ENCODE measurements at regions of chr18 and their contacts with region 1.

Region 1: DNA sequence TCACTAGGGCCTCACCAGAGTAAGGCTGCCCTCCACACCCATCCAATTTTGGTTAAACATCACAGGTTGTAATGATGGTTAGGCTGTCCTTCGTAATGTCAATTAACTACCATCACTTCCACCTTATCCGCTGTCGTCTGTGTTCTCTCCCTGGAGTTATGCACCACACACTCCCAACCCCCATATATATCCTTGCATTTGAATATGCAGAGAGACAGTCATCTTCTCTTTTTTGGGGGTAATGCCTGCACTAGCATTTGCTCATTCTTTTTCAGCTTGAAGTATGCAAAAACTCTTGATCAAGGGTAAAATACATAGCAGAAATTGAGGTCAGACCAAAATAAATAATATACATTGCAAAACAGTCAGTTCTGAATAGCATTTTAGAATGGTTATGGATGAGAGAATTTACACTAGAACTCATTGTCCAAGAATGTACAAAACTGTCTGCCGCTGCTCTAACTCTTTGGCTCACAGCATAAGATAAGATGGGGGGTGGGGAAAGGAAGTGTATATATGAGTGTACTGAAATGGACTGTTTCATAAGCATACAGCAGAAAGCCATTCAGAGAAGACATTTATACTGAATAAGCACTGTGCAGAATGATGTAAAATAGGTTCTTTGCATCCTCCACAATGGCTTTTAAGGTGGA is 397.8 kb upstream of the CHST9 start:
- DNase-seq: no peak
- ATAC-seq: no peak
- H3K4me3 ChIP-seq: no peak overlapping the region
- H3K27ac ChIP-seq: no peak overlapping the region
- H3K4me1 ChIP-seq: no peaks in the 10 kb centered on the region
- H3K27me3 ChIP-seq: no peaks in the 10 kb centered on the region
- CTCF ChIP-seq: no peak

Region 2: DNA sequence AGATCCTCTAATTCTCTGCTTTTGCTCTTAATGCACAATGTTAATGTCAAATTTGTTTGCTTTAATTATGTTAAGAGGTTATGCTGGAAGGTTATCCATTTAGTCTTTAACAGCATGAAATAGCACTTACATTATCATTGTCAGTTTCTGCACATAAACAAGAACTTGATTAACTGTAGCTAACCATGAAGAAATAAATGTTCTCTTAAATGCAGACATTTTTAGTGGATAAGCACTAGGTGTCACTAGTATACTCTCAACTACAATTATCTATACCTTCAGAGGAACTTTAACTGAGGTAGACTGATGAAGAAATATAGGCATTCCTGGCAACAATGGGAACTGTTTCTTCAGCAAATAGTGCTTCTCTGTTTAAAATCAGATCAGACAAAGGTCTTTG is 219.0 kb before region 1 on chr18:
- intact Hi-C with region 1: loop called in 1 of 10 experiments (anchors 5 kb)
- DNase-seq: no peak
- ATAC-seq: no peak
- H3K4me3 ChIP-seq: no peak overlapping the region
- H3K27ac ChIP-seq: no peak overlapping the region
- H3K4me1 ChIP-seq: no peaks in the 10 kb centered on the region
- H3K27me3 ChIP-seq: no peaks in the 10 kb centered on the region
- CTCF ChIP-seq: peak in 8 of 9 donors; percentile 4 to 50 (median 38)

Region 3: DNA sequence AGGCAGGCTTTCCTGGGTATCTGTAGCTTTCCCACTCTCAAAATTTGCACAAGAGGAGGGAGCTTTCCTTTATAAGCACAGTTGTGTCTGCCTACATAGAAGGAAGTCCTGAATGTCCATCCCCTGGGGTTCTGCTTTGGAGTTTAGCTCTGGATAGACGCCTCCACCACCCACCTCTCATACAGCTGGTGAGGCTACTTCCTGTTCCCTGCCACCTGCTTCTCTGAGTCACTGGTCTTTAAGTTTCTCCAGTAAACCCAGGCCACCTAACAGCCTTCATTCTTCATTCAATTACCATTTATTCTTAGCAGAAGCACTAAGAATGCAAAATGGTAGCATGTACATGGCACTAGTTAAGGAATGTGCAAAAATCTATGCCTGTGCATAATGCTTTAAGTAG is 186.3 kb after region 1 on chr18:
- intact Hi-C with region 1: no loop called
- DNase-seq: no peak
- ATAC-seq: no peak
- H3K4me3 ChIP-seq: no peak overlapping the region
- H3K27ac ChIP-seq: no peak overlapping the region
- H3K4me1 ChIP-seq: no peaks in the 10 kb centered on the region
- H3K27me3 ChIP-seq: no peaks in the 10 kb centered on the region
- CTCF ChIP-seq: no peak